ENCODE measurements at regions of chr16 and their contacts with region 1.

Region 1: GRCh38 chr16:58336332-58337089 is 41.7 kb upstream of the PRSS54 start:
- DNase-seq: peak; percentile 92
- ATAC-seq: peak; percentile 95
- H3K4me3 Mint-ChIP-seq: no peak overlapping the region
- H3K27ac Mint-ChIP-seq: no peak overlapping the region
- H3K4me1 Mint-ChIP-seq: peaks cover 5% of the 10 kb centered on the region
- H3K27me3 Mint-ChIP-seq: peaks cover 4% of the 10 kb centered on the region

Region 2: GRCh38 chr16:58299757-58300349 is 36.7 kb before region 1 on chr16:
- CTCF ChIA-PET with region 1: interaction called, 20 read pairs
- POLR2A ChIA-PET with region 1: no interaction called
- intact Hi-C with region 1: no loop called
- DNase-seq: peak; percentile 57
- ATAC-seq: no peak
- H3K4me3 Mint-ChIP-seq: no peak overlapping the region
- H3K27ac Mint-ChIP-seq: no peak overlapping the region
- H3K4me1 Mint-ChIP-seq: no peaks in the 10 kb centered on the region
- H3K27me3 Mint-ChIP-seq: peaks cover 5% of the 10 kb centered on the region

Region 3: GRCh38 chr16:58346831-58347371 is 10.4 kb after region 1 on chr16:
- CTCF ChIA-PET with region 1: interaction called, 14 read pairs
- POLR2A ChIA-PET with region 1: no interaction called
- intact Hi-C with region 1: no loop called
- DNase-seq: no peak
- ATAC-seq: no peak
- H3K4me3 Mint-ChIP-seq: no peak overlapping the region
- H3K27ac Mint-ChIP-seq: no peak overlapping the region
- H3K4me1 Mint-ChIP-seq: no peaks in the 10 kb centered on the region
- H3K27me3 Mint-ChIP-seq: peaks cover 21% of the 10 kb centered on the region

Region 4: DNA sequence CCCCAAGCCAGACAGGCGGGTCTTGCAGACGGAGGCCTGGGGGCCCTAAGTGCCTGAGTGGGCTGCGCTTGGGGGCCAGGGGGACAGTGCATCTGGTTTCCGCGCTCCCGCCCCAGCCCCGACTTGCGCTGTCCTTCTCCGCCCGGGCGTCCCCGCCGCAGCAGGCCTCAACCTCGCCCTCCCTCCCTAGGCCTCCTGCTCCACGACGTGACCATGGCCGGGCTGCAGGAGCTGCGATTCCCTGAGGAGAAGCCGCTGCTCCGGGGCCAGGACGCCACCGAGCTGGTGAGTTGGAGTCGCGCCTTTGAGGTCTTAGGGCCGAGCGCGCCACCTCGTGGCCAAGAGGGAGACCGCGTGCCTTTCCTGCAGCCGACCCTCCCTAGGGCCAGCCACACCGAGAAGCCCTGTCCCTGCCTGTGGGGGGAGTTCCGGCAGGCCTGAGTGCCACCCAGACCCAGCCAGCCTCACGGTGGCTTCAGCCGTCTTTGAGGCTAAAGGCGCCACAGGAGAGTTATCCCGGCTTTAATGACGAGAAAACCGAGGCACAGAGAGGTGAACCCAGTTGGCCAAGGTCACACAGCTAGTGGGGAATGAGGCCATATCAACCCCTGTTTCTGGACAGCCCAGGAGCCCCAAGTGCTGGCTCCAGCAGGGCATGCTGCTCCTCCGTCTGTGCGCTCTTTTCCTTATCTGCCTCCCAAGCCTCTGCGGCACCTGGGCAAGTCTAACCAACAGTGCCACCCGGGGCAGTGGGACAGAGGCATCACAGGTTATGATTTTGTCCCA is 151.2 kb after region 1 on chr16:
- CTCF ChIA-PET with region 1: interaction called, 173 read pairs
- POLR2A ChIA-PET with region 1: no interaction called
- intact Hi-C with region 1: loop called (anchors 1 kb)
- DNase-seq: peak; percentile 87
- ATAC-seq: peak; percentile 95
- H3K4me3 Mint-ChIP-seq: no peak overlapping the region
- H3K27ac Mint-ChIP-seq: no peak overlapping the region
- H3K4me1 Mint-ChIP-seq: no peaks in the 10 kb centered on the region
- H3K27me3 Mint-ChIP-seq: no peaks in the 10 kb centered on the region

Region 5: DNA sequence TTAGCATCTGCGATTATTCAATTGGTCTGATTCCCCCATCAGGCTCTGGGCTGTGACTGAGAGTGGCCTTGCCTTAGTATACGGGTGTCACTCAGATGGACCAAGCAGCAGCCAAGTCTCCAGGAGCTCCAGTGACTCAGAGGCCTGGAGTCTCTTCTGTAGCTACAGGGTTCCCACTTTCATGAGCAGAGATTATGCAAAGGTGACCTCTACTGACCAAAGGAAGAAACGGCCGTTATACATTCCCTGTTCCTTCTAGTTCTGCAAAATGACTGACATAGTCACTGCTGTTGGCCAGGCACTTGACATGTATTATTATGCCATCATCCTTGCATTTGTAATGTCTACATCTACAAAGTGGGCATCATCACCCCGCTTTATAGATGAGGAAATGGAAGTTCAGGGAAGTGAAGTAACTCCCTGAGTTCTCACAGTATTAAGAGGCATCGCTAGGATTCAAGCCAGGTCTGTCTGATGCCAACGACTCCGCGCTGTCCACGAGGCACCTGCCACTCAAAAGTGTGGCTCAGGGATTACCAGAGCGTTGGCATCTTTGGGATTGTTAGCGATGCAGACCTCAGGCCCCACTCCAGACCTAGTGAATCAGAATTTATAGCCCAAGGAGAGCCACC is 324.8 kb after region 1 on chr16:
- CTCF ChIA-PET with region 1: interaction called, 6 read pairs
- POLR2A ChIA-PET with region 1: no interaction called
- intact Hi-C with region 1: loop called in 1 of 2 experiments (anchors 2 kb)
- DNase-seq: peak; percentile 35
- ATAC-seq: peak; percentile 91
- H3K4me3 Mint-ChIP-seq: no peak overlapping the region
- H3K27ac Mint-ChIP-seq: no peak overlapping the region
- H3K4me1 Mint-ChIP-seq: no peaks in the 10 kb centered on the region
- H3K27me3 Mint-ChIP-seq: peaks cover 6% of the 10 kb centered on the region

Region 6: DNA sequence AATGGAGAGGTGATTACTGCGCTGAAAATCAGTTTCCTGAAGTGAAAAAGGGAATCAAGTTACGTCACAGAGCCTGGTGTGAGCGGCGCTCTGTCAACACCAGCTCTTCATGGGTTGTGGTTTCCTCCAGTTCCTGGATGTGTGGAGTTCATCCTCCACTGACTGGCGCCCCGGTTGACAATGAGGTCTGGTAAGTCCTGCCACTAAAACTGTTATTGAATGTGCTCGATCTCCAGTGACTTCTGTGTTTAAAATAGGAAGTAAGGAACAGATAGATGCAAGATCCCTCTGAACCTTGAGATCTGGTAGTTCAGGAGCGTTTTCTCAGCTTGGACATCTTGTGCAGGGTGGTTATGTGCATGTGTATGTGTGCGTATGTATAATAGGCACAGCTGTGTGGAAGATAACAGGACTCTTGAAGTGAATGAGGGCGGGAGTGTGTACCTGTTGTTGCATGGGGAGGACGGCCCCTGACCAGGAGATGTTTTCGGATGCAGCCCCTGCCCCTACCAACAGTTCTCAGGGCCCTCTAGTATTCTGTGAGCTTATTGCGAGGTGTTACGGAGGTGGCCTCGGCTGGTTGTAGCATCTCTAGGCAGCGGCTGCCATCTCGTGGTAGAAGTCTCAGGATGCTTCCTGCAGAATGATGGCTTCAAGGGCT is 419.6 kb after region 1 on chr16:
- CTCF ChIA-PET with region 1: interaction called, 36 read pairs
- POLR2A ChIA-PET with region 1: interaction called, 3 read pairs
- intact Hi-C with region 1: loop called (anchors 1 kb)
- DNase-seq: peak; percentile 90
- ATAC-seq: peak; percentile 97
- H3K4me3 Mint-ChIP-seq: no peak overlapping the region
- H3K27ac Mint-ChIP-seq: no peak overlapping the region
- H3K4me1 Mint-ChIP-seq: peaks cover 7% of the 10 kb centered on the region
- H3K27me3 Mint-ChIP-seq: no peaks in the 10 kb centered on the region

Measured in activated CD4-positive, alpha-beta T cell treated with anti-CD3 and anti-CD28 coated beads for 36 hours (primary cell).